CD8-positive, alpha-beta T cell (primary cell): ENCODE measurements at regions of chrX and their contacts with region 1.

Region 1: GRCh38 chrX:68828740-68829552 is at the start of gene EFNB1:
- DNase-seq: peak; percentile 70 to 92 (median 81)
- ATAC-seq: peak; percentile 96
- H3K4me3 ChIP-seq: peak within 1 kb of the TSS; percentile 74
- H3K4me3 Mint-ChIP-seq: peak within 1 kb of the TSS; percentile 89
- H3K27ac ChIP-seq: peak within 1 kb of the TSS; percentile 15 to 31
- H3K27ac Mint-ChIP-seq: peak within 1 kb of the TSS; percentile 76
- H3K4me1 ChIP-seq: peaks cover 6% of the 10 kb centered on the region
- H3K4me1 Mint-ChIP-seq: peaks cover 19% of the 10 kb centered on the region
- H3K27me3 ChIP-seq: peaks cover 0 to 3% of the 10 kb centered on the region in 2 experiments
- H3K27me3 Mint-ChIP-seq: no peaks in the 10 kb centered on the region
- CTCF ChIP-seq: no peak
- total RNA-seq, gene EFNB1: 4.3 to 4.9 TPM

Region 2: GRCh38 chrX:68480969-68481368 is 348.0 kb before region 1 on chrX:
- CTCF ChIA-PET with region 1: no interaction called
- POLR2A ChIA-PET with region 1: no interaction called
- intact Hi-C with region 1: no loop called
- DNase-seq: no peak
- ATAC-seq: no peak
- H3K4me3 ChIP-seq: no peak overlapping the region
- H3K4me3 Mint-ChIP-seq: no peak overlapping the region
- H3K27ac ChIP-seq: no peak overlapping the region
- H3K27ac Mint-ChIP-seq: no peak overlapping the region
- H3K4me1 ChIP-seq: no peaks in the 10 kb centered on the region
- H3K4me1 Mint-ChIP-seq: no peaks in the 10 kb centered on the region
- H3K27me3 ChIP-seq: no peaks in the 10 kb centered on the region
- H3K27me3 Mint-ChIP-seq: peaks cover 2% of the 10 kb centered on the region
- CTCF ChIP-seq: no peak

Region 3: GRCh38 chrX:68511255-68511654 is 317.7 kb before region 1 on chrX:
- CTCF ChIA-PET with region 1: interaction called, 3 read pairs
- POLR2A ChIA-PET with region 1: no interaction called
- intact Hi-C with region 1: loop called in 1 of 2 experiments (anchors 5 kb)
- DNase-seq: peak in 3 of 9 experiments; percentile 33 to 57 (median 49)
- ATAC-seq: peak; percentile 39
- H3K4me3 ChIP-seq: no peak overlapping the region
- H3K4me3 Mint-ChIP-seq: no peak overlapping the region
- H3K27ac ChIP-seq: no peak overlapping the region
- H3K27ac Mint-ChIP-seq: no peak overlapping the region
- H3K4me1 ChIP-seq: peaks cover 3% of the 10 kb centered on the region
- H3K4me1 Mint-ChIP-seq: peaks cover 27% of the 10 kb centered on the region
- H3K27me3 ChIP-seq: no peaks in the 10 kb centered on the region
- H3K27me3 Mint-ChIP-seq: no peaks in the 10 kb centered on the region
- CTCF ChIP-seq: peak; percentile 73

Region 4: GRCh38 chrX:68794461-68794860 is 34.5 kb before region 1 on chrX:
- CTCF ChIA-PET with region 1: no interaction called
- POLR2A ChIA-PET with region 1: no interaction called
- intact Hi-C with region 1: no loop called
- DNase-seq: no peak
- ATAC-seq: no peak
- H3K4me3 ChIP-seq: no peak overlapping the region
- H3K4me3 Mint-ChIP-seq: no peak overlapping the region
- H3K27ac ChIP-seq: no peak overlapping the region
- H3K27ac Mint-ChIP-seq: no peak overlapping the region
- H3K4me1 ChIP-seq: no peaks in the 10 kb centered on the region
- H3K4me1 Mint-ChIP-seq: no peaks in the 10 kb centered on the region
- H3K27me3 ChIP-seq: no peaks in the 10 kb centered on the region
- H3K27me3 Mint-ChIP-seq: peaks cover 3% of the 10 kb centered on the region
- CTCF ChIP-seq: no peak

Region 5: GRCh38 chrX:69165087-69165651 is 336.2 kb after region 1 on chrX and contains the start of gene PJA1:
- CTCF ChIA-PET with region 1: interaction called, 5 read pairs
- POLR2A ChIA-PET with region 1: interaction called, 7 read pairs
- intact Hi-C with region 1: loop called (anchors 1 to 2 kb)
- DNase-seq: peak; percentile 48 to 83 (median 72)
- ATAC-seq: peak; percentile 75
- H3K4me3 ChIP-seq: peak within 1 kb of the TSS; percentile 74
- H3K4me3 Mint-ChIP-seq: peak within 1 kb of the TSS; percentile 92
- H3K27ac ChIP-seq: peak within 1 kb of the TSS; percentile 73 to 74
- H3K27ac Mint-ChIP-seq: peak within 1 kb of the TSS; percentile 93
- H3K4me1 ChIP-seq: peaks cover 30% of the 10 kb centered on the region
- H3K4me1 Mint-ChIP-seq: peaks cover 35% of the 10 kb centered on the region
- H3K27me3 ChIP-seq: no peaks in the 10 kb centered on the region
- H3K27me3 Mint-ChIP-seq: no peaks in the 10 kb centered on the region
- CTCF ChIP-seq: no peak
- total RNA-seq, gene PJA1: 36.5 to 38.7 TPM

Region 6: DNA sequence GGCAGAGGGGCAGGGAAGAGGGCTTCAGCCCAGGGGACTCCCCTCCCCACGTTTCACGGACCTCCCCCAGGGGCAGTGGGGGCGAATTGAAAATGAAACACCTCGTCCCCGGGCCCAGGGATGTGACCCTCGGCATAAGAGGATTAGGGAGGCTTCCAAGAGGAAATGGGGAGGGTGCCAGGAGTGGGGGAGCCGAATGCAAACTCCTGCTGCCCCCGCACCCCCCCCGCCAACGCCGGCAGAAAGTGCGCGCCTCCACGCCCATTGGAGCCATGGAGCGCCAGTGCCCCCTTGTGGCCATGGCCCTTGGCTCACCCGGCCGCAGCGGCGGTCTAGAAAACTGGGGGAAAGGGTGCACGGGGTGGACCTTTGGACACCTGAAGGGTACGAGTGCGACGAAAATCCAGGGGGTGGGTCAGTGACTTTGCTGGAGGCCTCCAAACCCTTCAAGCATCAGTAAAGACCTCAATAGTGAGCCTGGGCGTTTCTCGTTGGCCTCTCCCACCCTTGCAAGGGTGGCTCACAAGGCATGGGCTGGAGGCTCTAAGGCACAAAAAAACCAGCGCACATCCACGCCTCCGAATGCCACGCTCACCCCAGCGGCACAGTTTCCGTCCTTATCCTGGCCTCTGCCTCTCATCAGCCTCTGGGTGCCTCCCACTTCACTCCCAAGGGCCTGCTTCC is 457.1 kb after region 1 on chrX:
- CTCF ChIA-PET with region 1: interaction called, 8 read pairs
- POLR2A ChIA-PET with region 1: no interaction called
- intact Hi-C with region 1: loop called in 1 of 2 experiments (anchors 2 kb)
- DNase-seq: peak; percentile 12 to 78 (median 53)
- ATAC-seq: peak; percentile 57
- H3K4me3 ChIP-seq: peak overlapping the region; percentile 32 to 33
- H3K4me3 Mint-ChIP-seq: peak overlapping the region; percentile 43
- H3K27ac ChIP-seq: no peak overlapping the region
- H3K27ac Mint-ChIP-seq: no peak overlapping the region
- H3K4me1 ChIP-seq: no peaks in the 10 kb centered on the region
- H3K4me1 Mint-ChIP-seq: no peaks in the 10 kb centered on the region
- H3K27me3 ChIP-seq: no peaks in the 10 kb centered on the region
- H3K27me3 Mint-ChIP-seq: no peaks in the 10 kb centered on the region
- CTCF ChIP-seq: peak; percentile 51

Region 7: DNA sequence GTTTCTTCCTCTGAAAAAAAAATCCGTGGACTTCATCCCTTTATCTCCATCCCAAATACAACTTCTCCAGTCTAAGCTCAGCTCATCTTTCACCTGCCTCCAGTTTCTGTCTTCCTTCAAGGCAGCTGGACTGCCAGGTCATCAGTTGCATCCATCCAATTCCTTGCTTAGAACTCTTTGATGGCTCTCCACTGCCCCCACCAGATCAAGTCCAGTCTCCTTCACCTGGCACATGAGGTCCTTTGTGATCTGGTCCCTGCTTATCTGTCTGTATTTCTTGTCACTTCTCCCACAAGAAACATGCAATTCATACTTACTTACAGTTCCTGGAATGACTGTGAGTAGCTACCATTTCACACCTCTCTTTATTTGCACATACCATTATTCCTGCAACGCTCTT is 1267.1 kb after region 1 on chrX:
- CTCF ChIA-PET with region 1: interaction called, 3 read pairs
- POLR2A ChIA-PET with region 1: no interaction called
- intact Hi-C with region 1: loop called in 1 of 2 experiments (anchors 5 kb)
- DNase-seq: no peak
- ATAC-seq: no peak
- H3K4me3 ChIP-seq: no peak overlapping the region
- H3K4me3 Mint-ChIP-seq: no peak overlapping the region
- H3K27ac ChIP-seq: no peak overlapping the region
- H3K27ac Mint-ChIP-seq: no peak overlapping the region
- H3K4me1 ChIP-seq: no peaks in the 10 kb centered on the region
- H3K4me1 Mint-ChIP-seq: no peaks in the 10 kb centered on the region
- H3K27me3 ChIP-seq: no peaks in the 10 kb centered on the region
- H3K27me3 Mint-ChIP-seq: peaks cover 8% of the 10 kb centered on the region
- CTCF ChIP-seq: no peak